MCF 10A (cell line): ENCODE measurements at regions of chr10 and their contacts with region 1.

Region 1: GRCh38 chr10:112280205-112280921 is 2.8 kb upstream of the TECTB start:
- DNase-seq: no peak
- H3K4me3 Mint-ChIP-seq: no peak overlapping the region
- H3K27ac Mint-ChIP-seq: no peak overlapping the region
- H3K4me1 Mint-ChIP-seq: peaks cover 10% of the 10 kb centered on the region
- H3K27me3 Mint-ChIP-seq: no peaks in the 10 kb centered on the region
- CTCF ChIP-seq: no peak

Region 2: DNA sequence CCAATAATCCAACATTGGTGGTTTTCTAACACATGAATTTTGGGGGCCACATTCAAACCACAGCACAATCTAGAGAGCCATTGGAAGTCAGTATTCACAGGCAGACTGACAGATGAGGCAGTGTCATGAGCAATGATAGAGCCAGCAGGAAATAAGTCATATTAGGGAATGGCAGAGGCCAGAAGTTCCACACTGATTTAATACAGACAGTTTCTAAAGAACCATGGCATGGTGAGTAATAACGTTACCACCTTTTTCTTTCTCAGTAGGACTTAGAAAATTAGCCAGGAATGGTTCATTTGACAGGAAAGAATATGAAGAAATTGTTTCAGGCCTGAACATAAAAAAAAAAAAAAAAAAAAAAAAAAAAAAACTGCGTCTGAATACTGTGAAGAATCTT is 307.1 kb before region 1 on chr10:
- CTCF ChIA-PET with region 1: no interaction called
- POLR2A ChIA-PET with region 1: no interaction called
- intact Hi-C with region 1: no loop called
- DNase-seq: peak; percentile 38
- H3K4me3 Mint-ChIP-seq: no peak overlapping the region
- H3K27ac Mint-ChIP-seq: no peak overlapping the region
- H3K4me1 Mint-ChIP-seq: peaks cover 25% of the 10 kb centered on the region
- H3K27me3 Mint-ChIP-seq: peaks cover 17% of the 10 kb centered on the region
- CTCF ChIP-seq: no peak

Region 3: GRCh38 chr10:112221545-112221944 is 58.8 kb before region 1 on chr10:
- CTCF ChIA-PET with region 1: interaction called, 3 read pairs
- POLR2A ChIA-PET with region 1: interaction called, 3 read pairs
- intact Hi-C with region 1: loop called (anchors 5 kb)
- DNase-seq: peak; percentile 78
- H3K4me3 Mint-ChIP-seq: no peak overlapping the region
- H3K27ac Mint-ChIP-seq: peak overlapping the region; percentile 72
- H3K4me1 Mint-ChIP-seq: peaks cover 59% of the 10 kb centered on the region
- H3K27me3 Mint-ChIP-seq: no peaks in the 10 kb centered on the region
- CTCF ChIP-seq: no peak